Activated CD4-positive, alpha-beta T cell treated with anti-CD3 and anti-CD28 coated beads for 36 hours (primary cell): ENCODE measurements at regions of chr14 and their contacts with region 1.

Region 1: GRCh38 chr14:91911474-91912032 is 35.9 kb downstream of the FBLN5 start:
- DNase-seq: peak; percentile 70
- ATAC-seq: peak; percentile 98
- H3K4me3 Mint-ChIP-seq: no peak overlapping the region
- H3K27ac Mint-ChIP-seq: peak overlapping the region; percentile 83
- H3K4me1 Mint-ChIP-seq: peaks cover 15% of the 10 kb centered on the region
- H3K27me3 Mint-ChIP-seq: peaks cover 2% of the 10 kb centered on the region

Region 2: GRCh38 chr14:90660865-90661570 is 1250.5 kb before region 1 on chr14:
- CTCF ChIA-PET with region 1: no interaction called
- POLR2A ChIA-PET with region 1: no interaction called
- intact Hi-C with region 1: no loop called
- DNase-seq: no peak
- ATAC-seq: no peak
- H3K4me3 Mint-ChIP-seq: no peak overlapping the region
- H3K27ac Mint-ChIP-seq: no peak overlapping the region
- H3K4me1 Mint-ChIP-seq: peaks cover 15% of the 10 kb centered on the region
- H3K27me3 Mint-ChIP-seq: no peaks in the 10 kb centered on the region

Region 3: DNA sequence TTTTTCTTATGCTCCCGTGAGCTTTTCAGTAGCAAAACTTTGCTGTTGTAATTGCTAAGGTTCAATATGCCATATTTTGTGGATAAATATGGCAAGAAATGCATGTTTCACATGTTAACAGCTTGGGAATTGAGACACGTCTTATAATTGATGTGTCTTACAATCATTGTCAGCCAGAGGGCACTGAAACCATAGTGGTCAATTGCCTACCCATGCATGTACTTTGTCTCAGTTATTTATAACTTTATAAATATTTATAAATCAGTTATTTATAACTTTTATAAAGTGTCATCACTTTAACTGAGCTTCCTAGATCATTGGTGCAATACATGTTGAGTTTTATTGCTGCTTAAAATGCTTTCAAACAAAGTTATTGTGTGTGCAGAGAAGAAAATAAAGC is 261.6 kb before region 1 on chr14:
- CTCF ChIA-PET with region 1: interaction called, 22 read pairs
- POLR2A ChIA-PET with region 1: no interaction called
- intact Hi-C with region 1: loop called (anchors 1 kb)
- DNase-seq: peak; percentile 42
- ATAC-seq: peak; percentile 51
- H3K4me3 Mint-ChIP-seq: no peak overlapping the region
- H3K27ac Mint-ChIP-seq: no peak overlapping the region
- H3K4me1 Mint-ChIP-seq: no peaks in the 10 kb centered on the region
- H3K27me3 Mint-ChIP-seq: no peaks in the 10 kb centered on the region

Region 4: GRCh38 chr14:91716999-91717398 is 194.6 kb before region 1 on chr14:
- CTCF ChIA-PET with region 1: interaction called, 8 read pairs
- POLR2A ChIA-PET with region 1: no interaction called
- intact Hi-C with region 1: loop called in 1 of 2 experiments (anchors 2 kb)
- DNase-seq: no peak
- ATAC-seq: no peak
- H3K4me3 Mint-ChIP-seq: no peak overlapping the region
- H3K27ac Mint-ChIP-seq: no peak overlapping the region
- H3K4me1 Mint-ChIP-seq: peaks cover 11% of the 10 kb centered on the region
- H3K27me3 Mint-ChIP-seq: no peaks in the 10 kb centered on the region

Region 5: GRCh38 chr14:91801358-91801757 is 110.2 kb before region 1 on chr14:
- CTCF ChIA-PET with region 1: interaction called, 11 read pairs
- POLR2A ChIA-PET with region 1: no interaction called
- intact Hi-C with region 1: no loop called
- DNase-seq: no peak
- ATAC-seq: no peak
- H3K4me3 Mint-ChIP-seq: no peak overlapping the region
- H3K27ac Mint-ChIP-seq: no peak overlapping the region
- H3K4me1 Mint-ChIP-seq: peaks cover 16% of the 10 kb centered on the region
- H3K27me3 Mint-ChIP-seq: no peaks in the 10 kb centered on the region

Region 6: GRCh38 chr14:91866061-91866460 is 45.5 kb before region 1 on chr14:
- CTCF ChIA-PET with region 1: interaction called, 7 read pairs
- POLR2A ChIA-PET with region 1: interaction called, 4 read pairs
- intact Hi-C with region 1: loop called in 1 of 2 experiments (anchors 5 kb)
- DNase-seq: peak; percentile 66
- ATAC-seq: peak; percentile 20
- H3K4me3 Mint-ChIP-seq: peak overlapping the region; percentile 84
- H3K27ac Mint-ChIP-seq: peak overlapping the region; percentile 97
- H3K4me1 Mint-ChIP-seq: peaks cover 91% of the 10 kb centered on the region
- H3K27me3 Mint-ChIP-seq: no peaks in the 10 kb centered on the region

Region 7: DNA sequence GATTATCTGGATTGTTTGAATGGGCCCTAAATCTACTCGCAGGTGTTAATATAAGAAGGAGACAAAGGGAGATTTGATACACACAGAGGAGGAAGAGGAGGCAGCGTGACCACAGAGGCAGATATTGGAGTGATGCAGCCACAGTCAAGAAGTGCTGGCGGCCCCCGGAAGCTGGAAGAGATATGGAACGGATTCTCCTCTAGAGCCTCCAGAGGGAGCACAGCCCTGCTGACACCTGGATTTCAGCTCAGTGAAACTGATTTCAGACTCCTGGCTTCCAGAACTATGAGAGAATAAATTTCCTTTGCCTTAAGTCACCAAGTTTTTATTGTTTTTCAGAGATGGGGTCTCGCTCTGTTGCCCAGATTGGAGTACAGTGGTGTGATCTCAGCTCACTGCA is 35.0 kb before region 1 on chr14:
- CTCF ChIA-PET with region 1: no interaction called
- POLR2A ChIA-PET with region 1: no interaction called
- intact Hi-C with region 1: no loop called
- DNase-seq: no peak
- ATAC-seq: no peak
- H3K4me3 Mint-ChIP-seq: no peak overlapping the region
- H3K27ac Mint-ChIP-seq: no peak overlapping the region
- H3K4me1 Mint-ChIP-seq: peaks cover 81% of the 10 kb centered on the region
- H3K27me3 Mint-ChIP-seq: no peaks in the 10 kb centered on the region